ENCODE measurements at regions of chr11 and their contacts with region 1.

Region 1: DNA sequence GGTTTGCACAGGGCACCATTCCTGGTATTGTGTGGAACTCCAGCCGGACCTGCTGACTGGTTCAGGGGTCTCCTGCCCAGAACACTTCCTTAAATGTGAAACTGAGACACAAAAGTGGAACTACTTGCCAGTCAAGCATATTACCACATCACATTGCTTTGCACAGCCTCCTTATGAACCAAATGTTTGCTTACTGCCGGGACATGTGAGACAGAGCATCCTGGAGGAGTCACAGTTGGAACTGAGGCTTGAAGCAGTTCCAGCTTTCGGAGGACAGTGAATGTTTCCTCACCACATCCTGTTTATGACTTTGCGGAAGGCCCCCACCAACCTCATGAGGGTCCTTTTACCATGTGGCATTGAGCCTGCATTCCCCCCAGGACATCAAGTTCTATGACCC is 105.8 kb upstream of the ARHGAP42 start:
- DNase-seq: no peak
- H3K4me3 ChIP-seq: no peak overlapping the region
- H3K27ac ChIP-seq: no peak overlapping the region
- H3K27me3 ChIP-seq: peaks cover 0 to 3% (median 0%) of the 10 kb centered on the region in 45 donors
- CTCF ChIP-seq: no peak

Region 2: GRCh38 chr11:100445231-100445735 is 136.0 kb before region 1 on chr11:
- intact Hi-C with region 1: no loop called
- DNase-seq: peak in 3 of 10 donors; percentile 6 to 59 (median 28)
- H3K4me3 ChIP-seq: no peak overlapping the region
- H3K27ac ChIP-seq: peak overlapping the region in 36 of 59 donors; percentile 3 to 85 (median 46)
- H3K27me3 ChIP-seq: no peaks in the 10 kb centered on the region
- CTCF ChIP-seq: peak in 2 of 56 donors; percentile 10 to 20

Region 3: DNA sequence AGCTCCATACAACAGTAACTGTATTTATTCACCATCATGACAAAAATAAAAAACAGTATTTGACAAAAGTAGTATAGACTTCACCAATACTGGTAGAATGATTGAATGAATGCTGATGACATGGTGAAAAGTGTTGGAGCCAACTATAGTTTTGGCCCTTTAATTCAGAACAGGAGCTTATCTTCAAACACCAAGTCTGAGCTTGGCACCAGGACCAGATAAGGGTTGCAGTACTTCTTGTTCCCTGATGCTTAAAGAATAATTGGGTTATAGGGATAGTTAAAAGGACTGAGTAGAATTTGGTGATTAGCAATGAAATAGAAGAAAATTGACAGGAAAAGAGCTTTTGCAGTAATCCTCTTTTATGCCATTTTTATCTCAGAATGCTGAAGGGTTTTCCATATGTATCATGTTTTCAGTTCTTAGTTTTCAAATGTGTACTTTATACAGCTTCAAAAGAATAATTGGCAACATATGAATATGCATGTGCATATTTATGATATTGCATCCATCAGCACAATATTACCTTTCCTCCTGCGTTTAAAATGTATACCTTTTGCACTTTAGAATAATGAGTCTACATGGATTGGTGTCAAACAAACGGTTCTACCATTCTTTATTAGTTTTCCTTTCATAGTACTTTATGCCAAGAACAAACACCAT is 108.5 kb before region 1 on chr11:
- intact Hi-C with region 1: no loop called
- DNase-seq: no peak
- H3K4me3 ChIP-seq: no peak overlapping the region
- H3K27ac ChIP-seq: no peak overlapping the region
- H3K27me3 ChIP-seq: peaks cover 0 to 5% (median 0%) of the 10 kb centered on the region in 45 donors
- CTCF ChIP-seq: no peak

Region 4: GRCh38 chr11:100632941-100633452 is 51.7 kb after region 1 on chr11:
- intact Hi-C with region 1: loop called in 1 of 2 experiments (anchors 10 kb)
- DNase-seq: peak in 5 of 10 donors; percentile 29 to 82 (median 42)
- H3K4me3 ChIP-seq: no peak overlapping the region
- H3K27ac ChIP-seq: peak overlapping the region in 15 of 59 donors; percentile 2 to 64 (median 13)
- H3K27me3 ChIP-seq: no peaks in the 10 kb centered on the region
- CTCF ChIP-seq: no peak

Region 5: DNA sequence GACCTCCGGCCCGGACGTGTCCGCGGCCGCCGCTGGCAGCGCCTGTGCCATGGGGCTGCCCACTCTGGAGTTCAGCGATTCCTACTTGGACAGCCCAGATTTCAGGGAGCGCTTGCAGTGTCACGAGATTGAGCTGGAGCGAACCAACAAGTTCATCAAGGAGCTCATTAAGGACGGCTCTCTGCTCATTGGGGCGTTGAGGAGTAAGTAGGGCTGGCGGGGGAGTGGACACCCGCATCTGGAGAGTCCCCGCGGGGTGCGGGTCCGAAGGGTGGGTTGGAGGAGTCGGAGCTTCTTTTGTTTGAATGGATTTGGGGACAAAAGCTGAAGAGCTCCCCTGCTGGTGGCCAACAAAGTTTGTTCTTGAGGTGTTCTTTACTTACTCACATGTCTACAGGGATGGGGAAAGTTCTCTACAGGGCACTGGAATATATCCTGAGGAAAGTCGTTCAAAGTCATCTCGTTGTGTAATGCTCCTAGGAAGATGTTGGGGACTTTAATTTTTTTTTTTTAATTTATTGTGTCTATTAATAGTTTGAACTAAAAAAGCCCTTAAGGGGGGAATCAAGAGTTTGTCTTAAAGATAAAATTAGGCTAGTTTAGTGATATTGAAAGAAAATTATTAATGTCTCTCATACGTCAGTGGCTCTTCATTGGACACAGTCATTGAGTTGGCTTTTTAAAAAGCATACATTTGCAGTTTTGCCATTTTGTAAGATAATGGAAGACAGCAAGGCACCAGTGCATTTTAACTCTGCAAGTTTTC is 106.5 kb after region 1 on chr11:
- intact Hi-C with region 1: loop called in 1 of 2 experiments (anchors 10 kb)
- DNase-seq: peak in 6 of 10 donors; percentile 8 to 45 (median 30)
- H3K4me3 ChIP-seq: peak overlapping the region; percentile 40 to 81 (median 67)
- H3K27ac ChIP-seq: peak overlapping the region in 36 of 59 donors; percentile 20 to 85 (median 66)
- H3K27me3 ChIP-seq: peaks cover 0 to 18% (median 0%) of the 10 kb centered on the region in 45 donors
- CTCF ChIP-seq: peak in 53 of 56 donors; percentile 11 to 65 (median 51)

Region 6: DNA sequence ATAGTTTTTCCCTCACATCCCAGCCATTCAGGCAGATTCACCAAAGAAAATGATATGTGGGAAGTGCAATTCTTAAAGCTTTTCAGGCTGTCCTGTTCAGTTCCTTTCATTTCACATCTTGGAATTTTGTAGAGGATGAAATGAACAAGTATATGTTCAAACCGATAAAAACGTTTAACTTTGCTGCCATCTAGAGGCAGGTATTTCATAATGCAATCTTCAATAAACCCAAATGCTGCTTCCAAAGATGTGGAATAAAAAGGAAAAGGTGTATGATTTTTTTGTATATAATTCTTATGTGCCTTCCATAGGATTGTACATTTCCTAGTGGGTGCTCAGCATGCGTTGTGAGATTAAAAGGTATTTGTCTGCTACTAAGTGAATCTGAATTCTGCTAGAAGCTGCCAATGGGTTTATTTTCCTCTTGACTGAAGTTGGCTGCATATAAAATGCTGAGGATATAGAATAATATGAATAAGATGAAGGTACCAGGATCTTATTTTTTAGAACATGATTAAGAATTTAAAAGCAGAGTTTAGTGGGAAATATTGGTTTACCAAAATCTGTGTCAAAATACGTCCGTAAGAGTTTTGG is 349.0 kb after region 1 on chr11:
- intact Hi-C with region 1: loop called (anchors 5 kb)
- DNase-seq: no peak
- H3K4me3 ChIP-seq: no peak overlapping the region
- H3K27ac ChIP-seq: no peak overlapping the region
- H3K27me3 ChIP-seq: no peaks in the 10 kb centered on the region
- CTCF ChIP-seq: peak; percentile 51 to 91 (median 78)